ENCODE measurements at regions of chr16 and their contacts with region 1.

Region 1: DNA sequence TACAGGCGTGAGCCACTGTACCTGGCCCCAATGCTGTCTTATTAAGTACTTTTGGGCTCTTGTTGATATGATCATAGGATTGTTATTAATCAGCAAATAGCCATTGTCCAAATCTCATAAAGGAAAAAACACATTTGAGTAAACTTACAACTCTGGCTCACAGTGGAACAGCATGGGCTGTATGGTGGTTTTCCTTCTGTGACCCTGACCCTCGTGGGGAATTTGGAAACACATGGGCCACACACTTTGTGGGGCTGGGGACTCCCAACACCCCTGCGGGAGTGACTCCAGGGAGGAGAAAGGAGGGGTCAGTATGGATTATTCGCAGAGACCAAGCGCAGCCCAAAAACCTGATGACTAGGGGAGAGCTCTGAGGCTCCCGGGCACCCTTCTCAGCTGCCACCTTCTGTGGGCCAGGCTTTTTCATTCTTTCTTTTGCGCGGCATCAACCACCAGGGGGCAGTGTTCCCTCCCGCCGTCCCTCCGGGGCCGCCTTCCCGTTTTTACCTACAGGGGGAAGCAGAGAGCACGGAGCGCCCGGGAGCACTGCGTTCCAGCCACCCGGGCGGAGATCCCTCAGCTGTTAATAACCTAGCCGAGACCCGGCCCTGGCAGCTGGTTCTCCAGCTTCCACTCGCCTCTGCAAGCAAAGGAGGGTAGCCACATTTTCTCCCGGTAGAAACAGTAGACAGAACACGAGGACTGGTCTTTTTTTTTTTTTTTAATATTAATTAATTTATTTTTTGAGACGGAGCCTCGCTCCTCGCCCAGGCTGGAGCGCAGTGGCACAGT is 9.7 kb downstream of the TSNAXIP1 start:
- DNase-seq: peak; percentile 87
- ATAC-seq: peak; percentile 93
- H3K4me3 Mint-ChIP-seq: no peak overlapping the region
- H3K27ac Mint-ChIP-seq: no peak overlapping the region
- H3K4me1 Mint-ChIP-seq: no peaks in the 10 kb centered on the region
- H3K27me3 Mint-ChIP-seq: no peaks in the 10 kb centered on the region
- CTCF ChIP-seq: peak; percentile 100

Region 2: GRCh38 chr16:67672739-67673662 is 143.4 kb before region 1 on chr16:
- CTCF ChIA-PET with region 1: interaction called, 42 read pairs
- POLR2A ChIA-PET with region 1: no interaction called
- DNase-seq: peak; percentile 79
- ATAC-seq: peak; percentile 62
- H3K4me3 Mint-ChIP-seq: no peak overlapping the region
- H3K27ac Mint-ChIP-seq: peak overlapping the region; percentile 30; the same call in 1 of the 2 replicates
- H3K4me1 Mint-ChIP-seq: no peaks in the 10 kb centered on the region; the same call in 1 of the 2 replicates
- H3K27me3 Mint-ChIP-seq: no peaks in the 10 kb centered on the region
- CTCF ChIP-seq: peak; percentile 62

Region 3: GRCh38 chr16:67779256-67780014 is 37.0 kb before region 1 on chr16:
- CTCF ChIA-PET with region 1: interaction called, 14 read pairs
- POLR2A ChIA-PET with region 1: no interaction called
- DNase-seq: no peak
- ATAC-seq: no peak
- H3K4me3 Mint-ChIP-seq: no peak overlapping the region
- H3K27ac Mint-ChIP-seq: 0 out of 2 replicates have a peak overlapping the region, but pooled peaks have one; percentile 31
- H3K4me1 Mint-ChIP-seq: peaks cover 6% of the 10 kb centered on the region
- H3K27me3 Mint-ChIP-seq: no peaks in the 10 kb centered on the region
- CTCF ChIP-seq: no peak

Region 4: GRCh38 chr16:67841764-67842508 is 25.5 kb after region 1 on chr16 and contains the start of gene THAP11:
- CTCF ChIA-PET with region 1: interaction called, 58 read pairs
- POLR2A ChIA-PET with region 1: interaction called, 4 read pairs
- DNase-seq: peak; percentile 98
- ATAC-seq: peak; percentile 51
- H3K4me3 Mint-ChIP-seq: peak within 1 kb of the TSS; percentile 94
- H3K27ac Mint-ChIP-seq: peak within 1 kb of the TSS; percentile 97
- H3K4me1 Mint-ChIP-seq: peaks cover 40% of the 10 kb centered on the region
- H3K27me3 Mint-ChIP-seq: no peaks in the 10 kb centered on the region
- CTCF ChIP-seq: peak; percentile 69
- total RNA-seq, gene THAP11: 46.5 to 49.0 TPM (median 47.4 TPM) in 3 replicates

Region 5: GRCh38 chr16:67872786-67873537 is 56.5 kb after region 1 on chr16 and contains the start of gene EDC4:
- CTCF ChIA-PET with region 1: interaction called, 20 read pairs
- POLR2A ChIA-PET with region 1: no interaction called
- DNase-seq: peak; percentile 76
- ATAC-seq: peak; percentile 74
- H3K4me3 Mint-ChIP-seq: peak within 1 kb of the TSS; percentile 92
- H3K27ac Mint-ChIP-seq: peak within 1 kb of the TSS; percentile 90
- H3K4me1 Mint-ChIP-seq: peaks cover 15% of the 10 kb centered on the region
- H3K27me3 Mint-ChIP-seq: no peaks in the 10 kb centered on the region
- CTCF ChIP-seq: no peak
- total RNA-seq, gene EDC4: 72.6 to 83.7 TPM (median 74.1 TPM) in 3 replicates

Region 6: DNA sequence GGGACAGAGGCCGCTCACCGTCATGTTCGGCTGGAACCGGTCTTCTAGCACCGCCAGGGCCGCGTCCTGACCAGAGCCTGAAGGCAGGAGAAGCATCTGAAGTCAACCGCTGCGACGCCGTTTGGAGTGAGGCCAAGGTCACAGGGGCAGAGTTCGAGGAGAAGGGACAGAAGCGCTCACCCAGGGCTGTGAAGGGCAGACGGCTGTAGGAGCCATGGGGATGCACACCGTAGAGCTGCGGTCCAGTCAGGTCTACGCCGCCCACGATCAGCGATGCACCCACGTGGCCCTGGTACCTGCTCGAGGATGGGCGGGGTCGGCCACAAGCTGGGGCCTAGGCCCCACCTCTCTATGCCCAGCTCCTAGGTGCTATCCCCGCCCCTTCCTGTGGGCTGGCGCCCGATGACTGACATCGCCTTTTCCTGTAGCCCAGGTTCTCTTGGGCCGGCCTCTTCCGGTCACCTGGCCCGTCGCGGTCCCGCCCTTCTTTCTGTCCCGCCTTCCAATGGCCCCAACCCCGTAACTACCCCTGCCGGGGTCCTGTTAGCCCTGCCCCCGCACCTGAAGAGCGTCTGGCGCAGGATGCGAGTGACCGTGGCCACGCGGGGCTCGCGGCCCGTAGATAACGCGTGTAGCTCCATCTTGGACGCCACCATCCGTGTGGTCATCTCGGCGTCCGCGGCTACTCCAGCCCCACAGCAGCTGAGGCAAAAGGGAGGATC is 119.1 kb after region 1 on chr16:
- CTCF ChIA-PET with region 1: interaction called, 12 read pairs
- POLR2A ChIA-PET with region 1: no interaction called
- DNase-seq: peak; percentile 98
- ATAC-seq: peak; percentile 92
- H3K4me3 Mint-ChIP-seq: peak overlapping the region; percentile 100
- H3K27ac Mint-ChIP-seq: peak overlapping the region; percentile 100
- H3K4me1 Mint-ChIP-seq: peaks cover 23% of the 10 kb centered on the region
- H3K27me3 Mint-ChIP-seq: no peaks in the 10 kb centered on the region
- CTCF ChIP-seq: no peak